RWPE1 (cell line): ENCODE measurements at regions of chr10 and their contacts with region 1.

Region 1: DNA sequence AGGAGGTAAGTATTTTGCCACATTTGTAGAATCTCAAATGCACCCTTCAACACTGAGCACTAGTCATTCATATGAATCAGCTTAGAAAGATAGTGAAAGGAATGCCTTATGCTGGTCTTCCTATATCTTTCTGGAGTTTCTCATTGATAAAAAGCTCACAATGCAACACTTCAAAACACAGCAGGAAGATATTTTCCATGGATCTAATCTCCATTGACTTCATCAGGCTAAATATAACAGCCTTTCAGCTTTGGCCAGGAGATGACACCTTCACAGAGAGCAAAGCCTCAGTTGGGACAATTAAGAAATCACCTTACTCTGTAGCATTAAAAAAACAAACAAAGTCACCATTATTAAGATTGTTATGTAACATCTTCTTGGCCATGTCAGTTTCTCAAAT is 6.7 kb downstream of the NRP1 start:
- DNase-seq: no peak
- H3K27ac ChIP-seq: no peak overlapping the region
- CTCF ChIP-seq: 0 out of 2 replicates have a peak, but pooled peaks have one; percentile 22

Region 2: DNA sequence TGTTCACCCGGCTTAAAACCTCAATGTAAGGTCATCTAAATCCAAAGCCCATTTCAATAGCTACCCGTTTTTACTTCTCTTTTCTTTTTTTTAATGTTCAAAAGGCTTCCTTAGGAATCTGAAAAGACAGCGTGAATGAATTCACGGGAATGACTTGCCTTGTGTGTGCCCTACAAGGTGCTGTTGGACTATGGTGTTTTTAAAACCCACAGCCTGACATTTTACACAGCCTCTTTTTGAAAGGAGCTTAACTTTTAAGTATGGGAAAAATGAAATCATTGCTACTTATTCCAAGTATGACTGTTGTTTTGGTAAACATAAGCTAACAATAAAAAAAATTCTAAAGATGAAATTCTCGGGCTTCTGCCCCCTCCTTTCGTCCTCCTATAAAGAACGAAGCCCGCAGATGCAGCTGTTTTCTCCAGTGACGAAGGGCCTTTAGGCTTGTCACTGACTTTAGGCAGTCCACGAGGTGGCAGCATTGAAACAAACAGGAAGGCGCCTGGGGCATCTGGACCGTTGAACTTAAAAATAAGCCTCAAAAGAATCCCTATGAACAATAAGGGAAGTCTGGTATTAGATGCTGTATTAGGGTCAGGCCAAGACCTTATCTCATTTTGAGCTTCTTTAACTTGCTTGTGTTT is 134.6 kb before region 1 on chr10:
- CTCF ChIA-PET with region 1: interaction called, 11 read pairs
- POLR2A ChIA-PET with region 1: no interaction called
- DNase-seq: peak; percentile 70
- H3K27ac ChIP-seq: peak overlapping the region; percentile 28; the same call in 1 of the 2 replicates
- CTCF ChIP-seq: peak; percentile 54